Activated CD4-positive, alpha-beta T cell treated with anti-CD3 and anti-CD28 coated beads for 36 hours (primary cell): ENCODE measurements at regions of chr13 and their contacts with region 1.

Region 1: GRCh38 chr13:21149568-21149967 is 26.8 kb downstream of the SKA3 start:
- DNase-seq: no peak
- ATAC-seq: peak; percentile 34
- H3K4me3 Mint-ChIP-seq: no peak overlapping the region
- H3K27ac Mint-ChIP-seq: peak overlapping the region; percentile 21
- H3K4me1 Mint-ChIP-seq: peaks cover 15% of the 10 kb centered on the region
- H3K27me3 Mint-ChIP-seq: no peaks in the 10 kb centered on the region

Region 2: DNA sequence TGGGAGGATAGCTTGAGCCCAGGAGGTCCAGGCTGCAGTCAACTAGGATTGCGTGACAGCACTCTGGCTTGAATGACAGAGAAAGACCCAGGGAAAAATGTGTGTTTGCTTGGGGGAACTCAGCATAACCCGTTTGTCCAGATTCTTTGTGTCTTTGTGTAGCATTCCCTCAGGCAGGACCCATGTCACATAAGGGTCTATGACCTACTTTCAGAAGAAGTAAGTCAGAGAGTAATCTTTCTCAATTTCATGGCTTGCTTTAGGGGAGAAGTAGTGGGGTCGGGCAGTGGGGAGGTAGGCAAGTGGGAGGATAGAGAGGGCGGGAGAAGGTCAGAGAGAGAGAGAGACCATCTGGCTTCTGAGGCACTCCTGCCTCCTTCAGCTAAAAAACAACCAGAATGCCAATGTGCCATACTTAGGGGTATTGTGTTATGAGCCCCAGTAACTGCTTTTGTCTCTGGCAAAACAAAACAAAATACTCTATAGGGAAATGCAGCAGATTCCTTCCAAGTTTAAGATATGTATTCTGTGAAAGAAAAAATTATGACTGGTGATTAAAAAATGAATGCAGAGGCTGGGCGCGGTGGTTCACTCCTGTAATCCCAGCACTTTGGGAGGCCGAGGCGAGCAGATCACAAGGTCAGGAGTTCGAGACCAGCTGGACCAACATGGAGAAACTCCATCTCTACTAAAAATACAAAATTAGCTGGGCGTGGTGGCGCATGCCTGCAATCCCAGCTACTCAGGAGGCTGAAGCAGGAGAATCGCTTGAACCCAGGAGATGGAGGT is 1354.7 kb before region 1 on chr13:
- CTCF ChIA-PET with region 1: no interaction called
- POLR2A ChIA-PET with region 1: interaction called, 10 read pairs
- intact Hi-C with region 1: no loop called
- DNase-seq: no peak
- ATAC-seq: no peak
- H3K4me3 Mint-ChIP-seq: no peak overlapping the region
- H3K27ac Mint-ChIP-seq: no peak overlapping the region
- H3K4me1 Mint-ChIP-seq: no peaks in the 10 kb centered on the region
- H3K27me3 Mint-ChIP-seq: no peaks in the 10 kb centered on the region

Region 3: GRCh38 chr13:21034603-21035191 is 114.9 kb before region 1 on chr13:
- CTCF ChIA-PET with region 1: no interaction called
- POLR2A ChIA-PET with region 1: no interaction called
- intact Hi-C with region 1: no loop called
- DNase-seq: no peak
- ATAC-seq: no peak
- H3K4me3 Mint-ChIP-seq: no peak overlapping the region
- H3K27ac Mint-ChIP-seq: no peak overlapping the region
- H3K4me1 Mint-ChIP-seq: peaks cover 9% of the 10 kb centered on the region
- H3K27me3 Mint-ChIP-seq: no peaks in the 10 kb centered on the region

Region 4: GRCh38 chr13:21139374-21139773 is 10.2 kb before region 1 on chr13:
- CTCF ChIA-PET with region 1: no interaction called
- POLR2A ChIA-PET with region 1: no interaction called
- intact Hi-C with region 1: no loop called
- DNase-seq: no peak
- ATAC-seq: no peak
- H3K4me3 Mint-ChIP-seq: peak overlapping the region; percentile 93
- H3K27ac Mint-ChIP-seq: peak overlapping the region; percentile 98
- H3K4me1 Mint-ChIP-seq: peaks cover 29% of the 10 kb centered on the region
- H3K27me3 Mint-ChIP-seq: peaks cover 2% of the 10 kb centered on the region